PC-3 (cell line): ENCODE measurements at regions of chr21 and their contacts with region 1.

Region 1: GRCh38 chr21:23968722-23969647 is 1638.3 kb downstream of the MRPL39 start:
- DNase-seq: peak; percentile 93
- ATAC-seq: peak; percentile 91
- H3K4me3 ChIP-seq: peak overlapping the region; percentile 47
- H3K27ac ChIP-seq: no peak overlapping the region
- H3K4me1 ChIP-seq: peaks cover 7% of the 10 kb centered on the region
- H3K27me3 ChIP-seq: no peaks in the 10 kb centered on the region
- CTCF ChIP-seq: peak; percentile 90

Region 2: DNA sequence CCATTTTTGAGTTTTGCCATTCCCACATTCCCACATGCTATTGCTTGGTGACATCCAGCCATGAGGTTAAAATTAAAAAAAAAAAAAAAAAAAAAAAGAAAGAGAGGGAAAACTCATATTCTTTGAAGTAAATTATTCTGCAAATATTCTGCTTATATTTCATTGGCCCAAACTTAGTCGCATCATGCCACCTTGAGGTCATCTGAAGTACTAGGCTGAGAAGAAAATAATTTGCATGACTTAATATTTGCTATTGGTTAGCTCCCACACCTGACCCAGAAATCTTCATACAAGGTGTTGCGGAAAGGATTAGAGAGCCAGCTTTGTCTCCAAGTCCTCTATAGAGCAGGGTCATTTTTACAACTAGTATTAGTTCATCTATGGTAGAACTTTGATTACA is 567.7 kb before region 1 on chr21:
- CTCF ChIA-PET with region 1: no interaction called
- POLR2A ChIA-PET with region 1: no interaction called
- intact Hi-C with region 1: loop called (anchors 5 kb)
- DNase-seq: peak; percentile 61
- ATAC-seq: peak; percentile 71; the same call in 1 of the 2 replicates
- H3K4me3 ChIP-seq: no peak overlapping the region
- H3K27ac ChIP-seq: no peak overlapping the region
- H3K4me1 ChIP-seq: no peaks in the 10 kb centered on the region
- H3K27me3 ChIP-seq: no peaks in the 10 kb centered on the region
- CTCF ChIP-seq: peak; percentile 68

Region 3: DNA sequence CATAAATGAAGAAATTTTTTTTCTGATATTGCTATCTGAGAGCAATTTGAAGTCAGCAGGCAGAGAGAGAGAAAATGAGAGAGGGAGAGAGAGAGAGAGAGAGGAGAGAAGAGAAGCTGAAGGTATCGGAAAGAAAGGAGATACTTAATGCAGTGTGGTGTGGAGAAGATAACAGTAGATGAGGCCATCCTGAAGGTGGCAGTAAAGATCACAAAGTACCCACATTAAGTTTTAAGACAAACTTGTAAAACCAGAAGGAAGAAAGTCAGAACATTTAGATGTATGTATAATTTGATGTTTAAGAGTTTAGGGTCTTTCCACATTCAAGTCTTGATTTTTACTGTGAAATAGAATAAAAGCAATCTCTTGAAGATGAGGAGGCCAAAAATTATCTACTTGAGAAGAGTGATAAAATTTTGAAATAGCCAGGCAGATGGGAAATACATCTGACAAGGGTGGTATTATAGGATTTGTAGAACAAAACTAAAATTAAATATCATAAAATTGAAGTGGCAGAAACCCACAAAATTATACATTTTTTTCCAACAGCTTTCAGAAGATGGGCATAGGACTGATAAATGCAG is 115.1 kb before region 1 on chr21:
- CTCF ChIA-PET with region 1: no interaction called
- POLR2A ChIA-PET with region 1: no interaction called
- intact Hi-C with region 1: loop called (anchors 1 kb)
- DNase-seq: peak; percentile 63
- ATAC-seq: peak; percentile 94
- H3K4me3 ChIP-seq: no peak overlapping the region
- H3K27ac ChIP-seq: no peak overlapping the region
- H3K4me1 ChIP-seq: no peaks in the 10 kb centered on the region
- H3K27me3 ChIP-seq: no peaks in the 10 kb centered on the region
- CTCF ChIP-seq: peak; percentile 75

Region 4: DNA sequence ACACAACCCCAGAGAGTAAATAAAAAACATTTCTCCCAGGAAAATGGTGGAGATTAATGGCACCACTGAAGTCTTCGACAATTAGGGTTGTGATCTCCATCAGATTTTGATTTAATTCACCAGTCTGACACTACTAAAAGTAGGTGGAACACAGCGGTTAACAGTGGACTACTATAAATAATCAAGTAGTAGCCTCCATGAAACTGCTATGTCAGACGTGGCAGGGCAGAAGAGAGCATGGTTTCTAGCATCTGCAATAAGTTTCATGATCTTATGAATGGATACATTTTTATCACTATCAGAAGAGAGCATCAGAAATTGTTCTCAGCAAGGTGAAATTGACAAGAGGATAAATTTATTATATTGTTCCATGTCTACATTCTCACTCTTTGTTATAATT is 68.3 kb before region 1 on chr21:
- CTCF ChIA-PET with region 1: no interaction called
- POLR2A ChIA-PET with region 1: no interaction called
- intact Hi-C with region 1: no loop called
- DNase-seq: no peak
- ATAC-seq: no peak
- H3K4me3 ChIP-seq: no peak overlapping the region
- H3K27ac ChIP-seq: no peak overlapping the region
- H3K4me1 ChIP-seq: 0 out of 2 replicates have a peak, but pooled peaks cover 3% of the 10 kb centered on the region
- H3K27me3 ChIP-seq: no peaks in the 10 kb centered on the region
- CTCF ChIP-seq: no peak

Region 5: DNA sequence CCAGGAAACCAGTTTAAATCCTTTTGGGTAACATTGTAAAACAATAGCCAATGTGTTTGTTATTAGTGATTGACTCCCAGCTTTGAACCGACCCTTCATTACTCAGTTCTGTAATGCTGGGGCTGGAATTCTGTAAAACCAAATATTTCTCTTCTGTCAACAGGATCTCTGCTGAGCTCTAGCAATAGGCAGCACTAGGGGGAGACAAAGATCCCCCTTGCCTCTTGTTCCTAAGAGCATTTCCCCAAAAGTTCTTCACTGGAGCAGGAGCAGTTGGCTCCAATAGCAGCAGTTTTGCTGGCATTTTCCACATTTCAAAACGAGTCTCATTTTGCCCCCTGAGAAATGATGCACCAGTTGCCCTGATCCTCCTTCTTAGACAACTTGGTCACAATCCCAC is 32.8 kb before region 1 on chr21:
- CTCF ChIA-PET with region 1: interaction called, 6 read pairs
- POLR2A ChIA-PET with region 1: no interaction called
- intact Hi-C with region 1: loop called (anchors 1 kb)
- DNase-seq: peak; percentile 53
- ATAC-seq: peak; percentile 81
- H3K4me3 ChIP-seq: no peak overlapping the region
- H3K27ac ChIP-seq: no peak overlapping the region
- H3K4me1 ChIP-seq: no peaks in the 10 kb centered on the region; the same call in 1 of the 2 replicates
- H3K27me3 ChIP-seq: no peaks in the 10 kb centered on the region
- CTCF ChIP-seq: peak; percentile 75

Region 6: GRCh38 chr21:24076179-24076578 is 107.2 kb after region 1 on chr21:
- CTCF ChIA-PET with region 1: interaction called, 3 read pairs
- POLR2A ChIA-PET with region 1: no interaction called
- intact Hi-C with region 1: loop called (anchors 1 kb)
- DNase-seq: peak; percentile 20
- ATAC-seq: no peak
- H3K4me3 ChIP-seq: no peak overlapping the region
- H3K27ac ChIP-seq: no peak overlapping the region
- H3K4me1 ChIP-seq: no peaks in the 10 kb centered on the region
- H3K27me3 ChIP-seq: no peaks in the 10 kb centered on the region
- CTCF ChIP-seq: peak; percentile 41; the same call in 1 of the 2 replicates